ENCODE measurements at regions of chr11 and their contacts with region 1.

Region 1: GRCh38 chr11:14347991-14348390 is 11.0 kb downstream of the RRAS2 start:
- DNase-seq: no peak
- H3K4me3 ChIP-seq: no peak overlapping the region
- CTCF ChIP-seq: no peak
- POLR2A ChIP-seq: no peak

Region 2: DNA sequence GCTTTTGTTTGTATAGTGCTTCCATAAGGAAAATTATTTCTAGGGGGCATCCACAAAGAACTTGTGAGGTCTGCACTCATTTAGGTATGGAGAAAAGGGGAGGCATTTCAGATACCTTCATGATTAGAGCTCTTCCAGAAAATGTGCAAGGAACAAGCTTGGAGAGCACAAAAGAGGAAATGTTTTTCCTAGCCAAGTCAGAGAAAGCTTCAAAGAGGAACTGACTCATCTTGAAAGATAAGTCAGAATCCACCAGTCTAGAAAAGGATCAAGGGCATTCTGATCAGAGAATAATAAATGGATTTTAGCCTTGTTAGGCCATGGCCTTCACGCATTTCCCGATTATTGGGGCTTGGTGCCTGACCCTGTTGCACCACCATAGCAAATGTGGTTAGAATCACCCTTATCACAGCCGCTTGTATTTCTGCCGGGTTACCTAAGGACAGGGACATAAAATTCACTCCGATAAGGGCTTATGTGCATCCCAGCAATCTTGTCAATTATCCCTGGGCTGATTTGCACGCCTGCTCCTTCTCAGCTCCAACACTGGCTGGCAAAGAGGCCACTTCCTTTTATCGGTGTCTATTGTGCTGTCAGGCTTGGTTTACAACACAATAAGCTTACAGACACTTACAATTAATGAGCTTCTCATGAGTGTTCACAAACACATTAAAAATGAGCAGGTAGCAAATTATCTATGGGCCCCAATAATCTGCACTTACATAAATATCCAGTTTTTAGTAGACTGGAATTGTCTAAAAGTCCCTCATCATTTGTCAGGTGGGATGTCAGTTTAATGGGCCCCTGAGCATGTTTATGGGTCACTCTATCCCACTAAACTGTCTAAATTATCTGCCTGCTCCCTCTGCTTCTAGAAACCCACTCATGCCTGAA is 1394.9 kb after region 1 on chr11:
- intact Hi-C with region 1: loop called (anchors 5 kb)
- DNase-seq: no peak
- H3K4me3 ChIP-seq: no peak overlapping the region
- CTCF ChIP-seq: no peak
- POLR2A ChIP-seq: no peak